Dorsolateral prefrontal cortex (tissue), 120 donors: ENCODE measurements at regions of chr2 and their contacts with region 1.

Region 1: DNA sequence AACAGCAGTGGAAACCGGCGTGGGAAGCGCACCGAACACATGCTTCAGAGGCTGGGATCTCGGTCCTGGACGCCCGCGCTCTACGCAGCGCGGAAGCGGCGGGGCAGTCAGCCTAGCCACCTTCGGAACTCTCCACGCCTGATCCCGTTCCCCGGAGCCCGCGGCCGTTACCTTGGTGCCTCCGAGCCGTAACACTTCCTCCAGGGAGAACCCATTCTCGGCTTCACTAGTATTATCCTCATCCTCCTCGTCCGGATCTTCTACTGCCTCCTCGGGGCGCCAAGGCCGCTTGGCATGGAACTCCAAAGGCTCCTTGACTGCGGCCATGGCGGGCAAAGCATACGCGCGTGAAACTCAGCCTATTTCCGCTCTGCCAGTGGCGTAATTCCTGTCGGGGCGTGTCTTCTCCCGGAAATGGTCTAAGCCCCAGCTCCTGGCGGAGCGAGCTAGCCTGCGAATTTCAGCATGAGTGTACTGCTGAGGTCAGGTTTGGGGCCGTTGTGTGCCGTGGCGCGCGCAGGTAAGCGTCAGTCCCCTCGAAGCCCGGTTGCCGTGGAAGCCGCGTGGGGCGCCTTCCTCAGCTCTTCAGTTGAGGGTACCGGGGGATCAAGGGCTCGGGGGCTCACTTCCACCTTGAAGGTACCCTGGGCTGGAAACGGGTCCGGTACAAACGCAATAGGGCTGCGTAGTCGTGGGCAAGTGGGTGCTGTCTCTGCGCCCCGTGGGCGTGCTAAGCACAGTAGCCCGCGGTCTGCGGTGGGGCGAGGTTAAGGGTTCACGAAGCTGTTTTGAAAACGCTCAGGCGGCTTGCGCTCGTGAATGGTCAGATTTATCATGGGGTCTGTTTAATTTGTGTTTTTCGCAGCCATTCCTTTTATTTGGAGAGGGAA is at the starts of genes CEBPZ and NDUFAF7:
- DNase-seq: peak; percentile 78 to 96 (median 93)
- H3K4me3 ChIP-seq: peak within 1 kb of the TSS; percentile 61 to 100 (median 88)
- H3K27ac ChIP-seq: peak within 1 kb of the TSS; percentile 46 to 96 (median 84)
- H3K27me3 ChIP-seq: no peaks in the 10 kb centered on the region
- CTCF ChIP-seq: peak in 23 of 56 donors; percentile 7 to 48 (median 18)
- total RNA-seq, gene CEBPZ: 18.0 to 44.8 (median 29.7) TPM
- total RNA-seq, gene NDUFAF7: 18.9 to 51.7 (median 32.5) TPM

Region 2: DNA sequence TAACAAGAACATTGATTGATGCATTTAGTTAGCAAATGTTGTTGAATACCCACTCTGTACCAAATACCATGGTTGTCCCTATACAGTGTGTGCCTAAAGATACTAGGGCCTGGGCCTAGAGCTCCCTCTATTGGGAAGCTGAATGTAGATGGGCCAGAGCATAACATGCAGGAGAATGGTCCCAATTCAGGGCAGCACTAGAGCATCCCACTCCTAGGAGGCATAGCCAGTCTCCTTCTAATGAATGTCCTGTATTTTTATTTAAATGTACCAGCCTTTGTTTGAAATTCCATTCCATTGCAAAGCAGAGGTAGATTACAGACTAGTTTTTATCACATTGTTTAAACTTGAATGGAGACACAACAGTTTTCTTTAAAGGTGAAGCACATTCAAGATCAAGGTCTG is 724.1 kb before region 1 on chr2:
- intact Hi-C with region 1: no loop called
- DNase-seq: peak in 7 of 10 donors; percentile 12 to 68 (median 50)
- H3K4me3 ChIP-seq: no peak overlapping the region
- H3K27ac ChIP-seq: peak overlapping the region in 1 of 59 donors; percentile 7
- H3K27me3 ChIP-seq: no peaks in the 10 kb centered on the region
- CTCF ChIP-seq: peak; percentile 9 to 83 (median 69)

Region 3: GRCh38 chr2:37083873-37084794 is 147.4 kb before region 1 on chr2 and contains the starts of genes GPATCH11 and HEATR5B:
- intact Hi-C with region 1: loop called in 1 of 2 experiments (anchors 10 kb)
- DNase-seq: peak; percentile 90 to 97 (median 94)
- H3K4me3 ChIP-seq: peak within 1 kb of the TSS; percentile 61 to 100 (median 91)
- H3K27ac ChIP-seq: peak within 1 kb of the TSS in 58 of 59 donors; percentile 4 to 93 (median 78)
- H3K27me3 ChIP-seq: no peaks in the 10 kb centered on the region
- CTCF ChIP-seq: peak in 16 of 56 donors; percentile 3 to 36 (median 26)
- total RNA-seq, gene GPATCH11: 11.3 to 24.1 (median 17.3) TPM
- total RNA-seq, gene HEATR5B: 25.4 to 49.0 (median 39.5) TPM

Region 4: DNA sequence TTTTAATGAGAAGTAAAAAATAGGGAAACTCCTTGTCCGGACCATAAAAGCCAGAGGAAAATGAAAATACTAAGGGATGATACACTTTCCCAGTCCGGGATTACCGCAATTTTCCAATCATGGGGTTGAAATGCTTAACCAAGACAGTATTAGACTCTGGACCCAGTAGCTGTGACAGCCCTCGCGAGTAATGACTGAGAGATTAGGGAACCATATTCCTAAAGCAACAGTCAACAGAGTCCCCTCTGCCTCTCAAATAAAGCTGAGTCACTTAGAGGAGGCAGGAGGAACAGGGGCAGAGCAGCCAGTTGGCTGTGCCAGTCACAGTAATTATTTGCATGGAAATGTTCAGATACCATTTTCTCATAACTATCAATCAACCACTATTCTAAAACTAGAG is 112.3 kb before region 1 on chr2:
- intact Hi-C with region 1: no loop called
- DNase-seq: no peak
- H3K4me3 ChIP-seq: no peak overlapping the region
- H3K27ac ChIP-seq: no peak overlapping the region
- H3K27me3 ChIP-seq: no peaks in the 10 kb centered on the region
- CTCF ChIP-seq: no peak

Region 5: GRCh38 chr2:37156857-37157714 is 74.4 kb before region 1 on chr2 and contains the start of gene EIF2AK2:
- intact Hi-C with region 1: loop called in 1 of 2 experiments (anchors 5 kb)
- DNase-seq: peak; percentile 50 to 84 (median 70)
- H3K4me3 ChIP-seq: peak within 1 kb of the TSS; percentile 51 to 97 (median 85)
- H3K27ac ChIP-seq: peak within 1 kb of the TSS; percentile 19 to 96 (median 82)
- H3K27me3 ChIP-seq: no peaks in the 10 kb centered on the region
- CTCF ChIP-seq: peak in 7 of 56 donors; percentile 7 to 29 (median 16)
- total RNA-seq, gene EIF2AK2: 30.7 to 122 (median 49.8) TPM

Region 6: DNA sequence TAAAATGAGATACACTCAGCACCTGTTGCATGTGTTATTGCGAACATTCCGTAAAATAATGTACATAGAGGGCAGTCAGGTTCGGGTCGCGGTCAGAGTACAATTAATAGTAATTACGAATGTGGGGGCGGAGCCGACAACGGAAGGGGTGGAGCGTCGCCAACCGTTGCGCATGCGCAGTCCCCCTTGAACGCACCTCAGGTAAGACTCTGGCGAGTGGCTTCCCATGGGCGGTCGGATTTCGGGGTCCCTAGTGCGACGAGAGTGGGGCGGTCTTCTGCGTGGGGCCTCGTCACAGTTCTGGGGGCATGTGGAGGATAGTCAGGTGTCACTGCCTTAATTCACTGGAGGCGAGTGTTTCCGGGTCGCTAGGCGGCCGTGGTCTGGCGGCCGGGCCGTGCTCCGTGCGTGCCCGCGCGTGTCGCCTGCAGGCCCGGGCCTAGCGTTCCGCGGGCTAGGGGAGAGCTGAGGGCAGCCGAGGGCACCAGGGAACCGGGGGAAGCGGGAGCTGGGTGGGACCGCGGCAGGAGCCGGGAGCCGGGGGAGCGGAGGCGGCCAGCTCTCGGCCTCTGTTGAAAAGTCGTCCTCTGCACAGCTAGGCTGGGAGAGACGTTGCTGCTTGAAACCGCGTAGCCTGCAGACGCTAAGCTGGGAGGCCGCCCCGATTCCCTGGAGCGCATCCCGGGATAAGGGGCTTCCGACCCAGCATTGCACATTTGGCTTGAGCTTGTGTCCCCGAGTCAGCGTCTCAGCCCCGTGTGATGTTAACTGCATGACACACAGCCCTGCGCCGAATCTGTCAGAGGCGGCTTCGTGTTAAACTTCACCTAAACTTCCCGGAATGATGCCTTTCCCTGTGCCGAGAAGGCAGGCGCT is 34.9 kb before region 1 on chr2 and contains the start of gene CEBPZOS:
- intact Hi-C with region 1: loop called in 1 of 2 experiments (anchors 2 kb)
- DNase-seq: peak; percentile 65 to 85 (median 81)
- H3K4me3 ChIP-seq: peak within 1 kb of the TSS; percentile 65 to 98 (median 89)
- H3K27ac ChIP-seq: peak within 1 kb of the TSS in 58 of 59 donors; percentile 27 to 96 (median 84)
- H3K27me3 ChIP-seq: no peaks in the 10 kb centered on the region
- CTCF ChIP-seq: peak in 16 of 56 donors; percentile 7 to 34 (median 22)
- total RNA-seq, gene CEBPZOS: 31.6 to 64.9 (median 49.0) TPM

Region 7: DNA sequence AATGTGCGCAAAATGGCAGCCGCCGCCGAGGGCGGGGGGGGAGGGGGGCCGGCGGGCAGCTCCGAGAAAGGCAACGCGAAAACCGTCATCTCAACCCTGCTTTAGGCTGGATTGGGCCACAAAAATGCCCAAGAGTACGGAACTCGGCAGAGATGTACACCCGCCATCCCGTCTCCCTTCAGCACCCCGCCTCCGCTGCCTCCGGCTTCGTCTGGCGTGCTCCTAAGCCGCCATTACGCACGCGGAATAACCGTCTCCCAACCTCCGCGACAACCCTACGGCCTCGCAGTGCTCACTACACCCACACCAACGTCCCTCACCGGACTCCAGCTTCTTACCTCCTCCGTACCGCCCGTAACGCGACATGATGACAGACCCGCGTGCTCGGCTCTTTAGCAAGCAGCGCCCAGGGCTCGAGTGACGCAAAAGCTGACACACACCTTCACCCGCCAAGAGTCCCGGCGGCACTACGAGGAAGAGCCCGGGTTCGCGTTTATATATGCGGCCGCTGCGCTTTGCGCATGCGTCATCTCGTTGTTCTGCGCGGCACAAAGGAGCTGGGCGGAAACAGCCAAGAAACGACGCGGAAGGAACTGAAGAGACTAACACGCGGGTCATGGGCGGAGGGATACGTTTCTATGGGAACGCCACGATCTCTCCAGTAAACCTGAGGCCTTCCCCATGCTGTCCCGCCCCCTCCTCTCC is 1519.6 kb after region 1 on chr2 and contains the start of gene SRSF7:
- intact Hi-C with region 1: no loop called
- DNase-seq: peak; percentile 94 to 97 (median 96)
- H3K4me3 ChIP-seq: peak within 1 kb of the TSS; percentile 53 to 99 (median 91)
- H3K27ac ChIP-seq: peak within 1 kb of the TSS; percentile 89 to 100 (median 99)
- H3K27me3 ChIP-seq: no peaks in the 10 kb centered on the region
- CTCF ChIP-seq: peak in 22 of 56 donors; percentile 1 to 49 (median 14)
- total RNA-seq, gene SRSF7: 66.9 to 135 (median 93.8) TPM